Activated T-helper 1 cell treated with anti-CD3 and anti-CD28 coated beads, Interleukin-12 subunit alpha, Interleukin-12 subunit beta, Interleukin-2, Interleukin-4 antibody, amounts not matched to agents 30 ng/mL and 10 ng/mL and 1 ng/mL, durations not matched to agents 14 hours and 24 hours and 36 hours (primary cell): ENCODE measurements at regions of chr1 and their contacts with region 1.

Region 1: DNA sequence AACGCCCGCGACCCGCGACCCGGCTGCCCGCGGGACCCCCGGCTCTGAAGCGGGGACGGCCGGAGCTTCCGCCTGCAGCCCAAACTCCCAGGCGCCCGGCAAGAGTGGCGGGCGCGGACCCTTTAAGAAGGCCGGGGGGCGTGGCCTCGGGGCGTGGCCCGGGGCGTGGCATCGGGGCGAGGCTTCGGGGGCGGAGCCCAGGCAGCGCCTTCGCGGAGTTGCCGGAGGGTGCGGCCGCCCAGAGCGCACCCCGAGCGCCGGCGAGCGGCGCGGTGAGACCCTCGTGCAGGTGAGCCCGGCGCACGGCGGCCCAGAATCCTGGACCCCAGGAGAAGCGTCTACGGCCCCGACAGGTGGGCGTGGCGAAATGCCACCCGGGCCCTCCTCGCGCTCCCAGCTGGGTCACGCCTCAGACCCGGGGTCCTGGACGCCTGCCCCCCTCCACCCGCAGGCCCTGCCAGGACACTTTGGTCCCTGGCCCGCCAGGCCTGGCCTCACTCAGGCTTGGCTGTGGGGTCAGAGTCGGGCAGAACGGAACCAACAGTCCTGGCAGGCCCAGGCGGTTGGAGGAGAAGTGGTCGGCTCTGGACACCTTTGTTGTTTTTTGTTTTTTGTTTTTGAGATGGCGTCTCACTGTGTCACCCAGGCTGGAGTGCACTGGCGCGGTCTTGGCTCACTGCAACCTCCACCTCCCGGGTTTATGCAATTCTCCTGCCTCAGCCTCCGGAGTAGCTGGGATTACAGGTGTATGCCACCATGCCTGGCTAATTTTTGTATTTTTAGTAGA is 14.4 kb downstream of the RNF223 start:
- DNase-seq: peak; percentile 85
- H3K4me3 Mint-ChIP-seq: peak overlapping the region; percentile 86
- H3K27ac Mint-ChIP-seq: no peak overlapping the region
- H3K4me1 Mint-ChIP-seq: no peaks in the 10 kb centered on the region
- H3K27me3 Mint-ChIP-seq: peaks cover 25% of the 10 kb centered on the region

Region 2: DNA sequence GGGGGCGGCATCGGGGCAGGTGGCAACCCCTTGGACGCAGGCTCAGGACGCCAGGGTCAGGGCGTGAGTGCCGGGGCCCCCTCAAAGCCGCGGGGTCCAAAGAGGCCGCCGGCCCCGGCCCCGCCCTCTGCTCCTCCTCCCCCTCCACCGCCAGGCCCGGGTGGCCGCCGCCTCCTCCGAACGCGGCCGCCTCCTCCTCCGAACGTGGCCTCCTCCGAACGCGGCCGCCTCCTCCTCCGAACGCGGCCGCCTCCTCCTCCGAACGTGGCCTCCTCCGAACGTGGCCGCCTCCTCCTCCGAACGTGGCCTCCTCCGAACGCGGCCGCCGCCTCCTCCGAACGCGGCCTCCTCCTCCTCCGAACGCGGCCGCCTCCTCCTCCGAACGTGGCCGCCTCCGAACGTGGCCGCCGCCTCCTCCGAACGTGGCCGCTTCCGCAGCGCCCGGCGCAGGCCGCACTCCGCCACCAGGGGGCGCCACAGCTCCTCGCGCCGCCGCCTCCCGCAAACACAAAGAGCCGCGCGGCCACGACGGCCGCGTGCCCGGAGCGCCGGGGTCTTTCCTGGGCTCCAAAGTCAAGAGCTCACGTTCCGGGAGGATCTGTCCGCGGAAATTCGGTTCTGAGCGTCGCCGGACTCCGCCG is 155.3 kb before region 1 on chr1:
- intact Hi-C with region 1: no loop called
- DNase-seq: peak; percentile 83
- H3K4me3 Mint-ChIP-seq: peak overlapping the region; percentile 45
- H3K27ac Mint-ChIP-seq: no peak overlapping the region
- H3K4me1 Mint-ChIP-seq: peaks cover 5% of the 10 kb centered on the region
- H3K27me3 Mint-ChIP-seq: peaks cover 40% of the 10 kb centered on the region

Region 3: GRCh38 chr1:958823-959729 is 100.6 kb before region 1 on chr1 and contains the start of gene NOC2L:
- intact Hi-C with region 1: loop called (anchors 1 kb)
- DNase-seq: peak; percentile 88
- H3K4me3 Mint-ChIP-seq: peak within 1 kb of the TSS; percentile 97
- H3K27ac Mint-ChIP-seq: peak within 1 kb of the TSS; percentile 79
- H3K4me1 Mint-ChIP-seq: peaks cover 7% of the 10 kb centered on the region
- H3K27me3 Mint-ChIP-seq: peaks cover 2% of the 10 kb centered on the region
- total RNA-seq, gene NOC2L: 180 TPM in 2 replicates

Region 4: DNA sequence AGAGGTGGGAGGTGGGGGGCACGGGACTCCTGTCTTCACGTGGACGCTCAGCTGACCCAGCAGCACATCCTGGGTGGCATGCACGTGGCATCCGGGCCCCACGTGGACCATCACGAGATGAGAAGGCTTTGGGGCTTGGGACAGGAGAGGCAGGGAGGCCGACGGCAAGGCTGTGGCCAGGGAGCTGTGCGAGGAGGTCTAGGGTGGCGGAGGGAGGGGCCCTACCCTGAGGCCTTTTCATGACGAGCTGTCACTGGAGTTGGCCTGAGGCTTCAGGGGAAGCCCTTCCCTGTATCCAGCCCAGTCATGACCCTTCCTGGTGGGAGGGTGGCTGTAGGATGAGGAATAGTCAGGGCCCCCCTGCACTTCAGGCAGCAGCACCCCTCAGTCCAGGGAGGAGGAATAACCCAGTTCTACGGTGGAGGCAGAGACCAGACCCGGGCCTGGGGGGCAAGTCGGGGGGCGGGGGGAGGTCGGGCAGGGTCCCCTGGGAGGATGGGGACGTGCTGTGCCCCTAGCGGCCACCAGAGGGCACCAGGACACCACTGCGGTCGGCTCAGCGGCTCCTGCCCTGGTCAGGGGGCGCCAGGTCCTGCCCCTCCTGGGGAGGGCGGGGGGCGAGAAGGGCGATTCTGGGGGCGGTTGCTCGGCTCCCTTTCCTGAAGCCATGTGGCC is 75.8 kb before region 1 on chr1:
- intact Hi-C with region 1: loop called (anchors 1 kb)
- DNase-seq: peak; percentile 43
- H3K4me3 Mint-ChIP-seq: no peak overlapping the region
- H3K27ac Mint-ChIP-seq: no peak overlapping the region
- H3K4me1 Mint-ChIP-seq: no peaks in the 10 kb centered on the region
- H3K27me3 Mint-ChIP-seq: peaks cover 19% of the 10 kb centered on the region

Region 5: DNA sequence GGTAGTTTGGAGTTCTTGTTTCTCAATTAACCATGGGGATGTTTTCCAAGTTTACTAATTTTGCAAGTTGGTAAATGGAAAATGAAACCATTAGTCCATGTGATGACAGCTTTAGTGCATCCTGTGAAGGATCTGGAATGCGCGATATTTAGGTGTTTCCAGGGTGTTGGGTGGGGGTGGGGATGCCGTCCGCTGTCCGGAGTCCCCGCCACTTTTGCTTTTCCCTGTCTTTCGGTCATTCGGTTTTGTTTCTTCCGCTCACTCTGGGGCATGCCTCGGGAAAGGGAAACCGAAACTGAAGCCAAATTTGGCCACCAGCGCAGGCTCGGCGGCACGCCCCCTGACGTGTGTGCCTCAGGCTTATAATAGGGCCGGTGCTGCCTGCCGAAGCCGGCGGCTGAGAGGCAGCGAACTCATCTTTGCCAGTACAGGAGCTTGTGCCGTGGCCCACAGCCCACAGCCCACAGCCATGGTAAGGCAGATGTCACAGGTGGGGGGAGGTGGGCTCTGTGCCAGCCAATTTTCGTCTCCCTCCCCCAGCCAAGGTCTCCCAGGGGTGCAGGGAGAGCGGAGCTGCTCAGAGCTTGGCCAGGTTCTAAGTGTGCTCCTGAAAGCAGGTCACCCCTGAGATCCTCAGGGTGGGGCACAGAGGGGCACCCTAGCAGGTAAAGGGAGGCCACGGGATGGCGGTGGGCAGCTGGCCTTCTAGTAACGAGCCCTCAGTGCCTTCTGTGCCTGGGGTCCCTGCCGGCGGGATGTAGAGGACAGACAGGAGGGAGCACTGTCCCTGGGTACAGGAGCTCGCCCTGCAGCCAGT is 46.4 kb before region 1 on chr1 and contains the start of gene ISG15:
- intact Hi-C with region 1: loop called (anchors 1 kb)
- DNase-seq: peak; percentile 89
- H3K4me3 Mint-ChIP-seq: peak within 1 kb of the TSS; percentile 89
- H3K27ac Mint-ChIP-seq: peak within 1 kb of the TSS; percentile 96
- H3K4me1 Mint-ChIP-seq: peaks cover 37% of the 10 kb centered on the region
- H3K27me3 Mint-ChIP-seq: peaks cover 5% of the 10 kb centered on the region
- total RNA-seq, gene ISG15: 52.9 and 53.7 TPM in 2 replicates

Region 6: DNA sequence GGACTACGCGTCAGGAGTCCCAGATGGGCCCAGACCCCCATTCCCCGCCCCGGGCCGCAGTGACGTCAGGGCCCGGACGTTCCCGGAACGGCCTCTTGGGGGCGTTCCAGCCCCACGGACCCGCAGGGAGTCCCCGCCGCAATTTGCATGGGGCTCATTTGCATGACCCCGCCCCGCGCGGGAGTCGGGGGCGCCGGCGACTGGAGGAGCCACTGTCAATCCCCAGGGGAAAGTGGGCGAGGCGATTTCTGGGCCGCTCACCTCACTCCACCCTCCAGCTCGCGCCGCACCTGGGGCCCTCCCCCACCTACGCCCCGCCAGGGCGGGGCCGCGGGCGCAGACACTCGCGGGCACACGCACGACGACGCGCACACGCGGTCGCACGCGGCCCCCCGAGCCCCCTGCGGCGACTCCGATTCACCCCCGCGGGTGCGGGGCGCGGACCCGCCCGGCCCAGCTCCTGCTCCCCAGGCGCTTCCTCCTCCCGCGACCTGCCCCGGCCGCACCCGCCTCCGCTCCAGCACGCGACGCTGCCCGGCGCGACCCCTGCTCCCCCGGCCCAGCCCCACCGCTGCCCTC is 26.6 kb before region 1 on chr1:
- intact Hi-C with region 1: loop called (anchors 1 kb)
- DNase-seq: peak; percentile 84
- H3K4me3 Mint-ChIP-seq: peak overlapping the region; percentile 37
- H3K27ac Mint-ChIP-seq: no peak overlapping the region
- H3K4me1 Mint-ChIP-seq: no peaks in the 10 kb centered on the region
- H3K27me3 Mint-ChIP-seq: peaks cover 14% of the 10 kb centered on the region

Region 7: DNA sequence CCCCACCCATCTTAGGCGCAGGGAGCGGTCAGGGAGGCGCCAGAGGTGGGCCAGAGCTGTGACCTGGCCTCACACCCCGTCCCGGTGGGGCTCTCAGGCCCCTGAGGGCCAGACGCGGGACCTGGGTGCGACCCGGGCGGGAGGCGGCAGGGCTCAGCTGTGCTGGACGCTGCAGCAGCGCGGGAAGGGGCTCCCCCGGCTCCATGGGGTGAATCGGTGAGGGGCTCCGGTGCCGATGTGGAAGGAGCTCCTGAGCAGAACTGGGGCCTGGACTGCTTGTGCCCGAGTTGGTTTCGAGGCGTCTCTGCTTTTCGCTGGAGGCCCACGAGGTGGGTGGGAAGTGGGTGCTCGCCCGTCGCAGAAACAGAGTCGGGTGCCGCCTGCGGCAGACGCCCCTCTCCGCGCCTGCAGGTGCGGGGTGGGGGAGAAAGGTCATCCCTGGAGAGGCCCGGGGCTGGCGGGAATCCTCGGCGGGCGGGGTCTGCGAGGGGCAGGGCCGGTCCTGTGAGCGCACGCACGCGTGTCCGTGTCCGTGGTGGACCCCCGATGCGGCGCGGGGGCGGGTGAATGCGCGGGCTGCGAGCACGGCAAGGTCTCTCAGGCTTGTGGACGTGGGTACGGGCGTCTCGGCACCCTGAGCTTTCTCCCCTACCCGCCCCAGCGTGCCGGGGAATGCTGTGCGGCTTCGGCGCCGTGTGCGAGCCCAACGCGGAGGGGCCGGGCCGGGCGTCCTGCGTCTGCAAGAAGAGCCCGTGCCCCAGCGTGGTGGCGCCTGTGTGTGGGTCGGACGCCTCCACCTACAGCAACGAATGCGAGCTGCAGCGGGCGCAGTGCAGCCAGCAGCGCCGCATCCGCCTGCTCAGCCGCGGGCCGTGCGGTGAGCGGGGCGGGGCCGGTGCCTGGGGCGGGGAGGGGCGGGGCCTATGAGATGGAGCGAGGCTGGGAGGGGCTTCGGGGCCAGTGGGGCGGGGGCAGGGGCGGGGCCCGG is 19.4 kb before region 1 on chr1:
- intact Hi-C with region 1: loop called (anchors 1 kb)
- DNase-seq: peak; percentile 78
- H3K4me3 Mint-ChIP-seq: peak overlapping the region; percentile 64
- H3K27ac Mint-ChIP-seq: no peak overlapping the region
- H3K4me1 Mint-ChIP-seq: peaks cover 14% of the 10 kb centered on the region
- H3K27me3 Mint-ChIP-seq: peaks cover 16% of the 10 kb centered on the region

Region 8: DNA sequence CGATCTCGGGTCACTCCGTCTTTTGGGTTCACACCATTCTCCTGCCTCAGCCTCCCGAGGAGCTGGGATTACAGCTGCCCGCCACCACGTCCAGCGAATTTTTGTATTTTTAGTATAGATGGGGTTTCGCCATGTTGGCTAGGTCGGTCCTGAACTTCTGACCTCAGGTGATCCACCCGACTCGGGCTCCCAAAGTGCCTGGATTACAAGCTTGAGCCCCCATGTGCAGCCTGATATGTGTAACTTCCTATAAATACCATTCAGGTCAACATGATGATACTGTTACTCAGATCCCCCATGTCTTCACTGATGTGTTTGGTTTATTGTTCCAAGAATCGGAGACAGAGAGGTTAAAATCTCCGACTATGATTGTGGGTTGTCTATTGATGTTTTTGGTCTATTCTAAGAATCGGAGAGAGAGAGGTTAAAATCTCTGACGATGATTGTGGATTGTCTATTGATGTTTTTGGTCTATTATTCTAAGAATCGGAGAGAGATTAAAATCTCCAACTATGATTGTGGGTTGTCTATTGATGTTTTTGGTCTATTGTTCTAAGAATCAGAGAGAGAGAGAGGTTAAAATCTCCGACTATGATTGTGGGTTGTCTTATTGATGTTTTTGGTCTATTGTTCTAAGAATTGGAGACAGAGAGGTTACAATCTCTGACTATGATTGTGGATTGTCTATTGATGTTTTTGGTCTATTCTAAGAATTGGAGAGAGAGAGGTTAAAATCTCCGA is 39.2 kb after region 1 on chr1:
- intact Hi-C with region 1: loop called (anchors 5 kb)
- DNase-seq: no peak
- H3K4me3 Mint-ChIP-seq: no peak overlapping the region
- H3K27ac Mint-ChIP-seq: peak overlapping the region; percentile 74
- H3K4me1 Mint-ChIP-seq: peaks cover 26% of the 10 kb centered on the region
- H3K27me3 Mint-ChIP-seq: peaks cover 9% of the 10 kb centered on the region